ENCODE measurements at regions of chr5 and their contacts with region 1.

Region 1: GRCh38 chr5:141940695-141941271 is 17.1 kb downstream of the DELE1 start:
- DNase-seq: no peak
- ATAC-seq: peak; percentile 68
- H3K4me3 ChIP-seq: no peak overlapping the region
- H3K27ac ChIP-seq: no peak overlapping the region
- H3K4me1 ChIP-seq: no peaks in the 10 kb centered on the region
- H3K27me3 ChIP-seq: no peaks in the 10 kb centered on the region
- CTCF ChIP-seq: no peak

Region 2: GRCh38 chr5:142108432-142109330 is 167.9 kb after region 1 on chr5 and contains the start of gene NDFIP1:
- CTCF ChIA-PET with region 1: interaction called, 10 read pairs
- POLR2A ChIA-PET with region 1: no interaction called
- in situ Hi-C with region 1: no loop called
- intact Hi-C with region 1: no loop called
- DNase-seq: no peak
- ATAC-seq: peak; percentile 100
- H3K4me3 ChIP-seq: peak within 1 kb of the TSS; percentile 70 to 72
- H3K27ac ChIP-seq: peak within 1 kb of the TSS; percentile 90
- H3K4me1 ChIP-seq: peaks cover 19% of the 10 kb centered on the region
- H3K27me3 ChIP-seq: no peaks in the 10 kb centered on the region
- CTCF ChIP-seq: peak; percentile 22
- total RNA-seq, gene NDFIP1: 40.9 TPM

Measured in Panc1 (cell line).